Left cardiac atrium (tissue), 4 donors: ENCODE measurements at regions of chr15 and their contacts with region 1.

Region 1: GRCh38 chr15:96321639-96322535 is 8.6 kb upstream of the NR2F2 start:
- DNase-seq: peak; percentile 46
- ATAC-seq: peak; percentile 35 to 55

Region 2: DNA sequence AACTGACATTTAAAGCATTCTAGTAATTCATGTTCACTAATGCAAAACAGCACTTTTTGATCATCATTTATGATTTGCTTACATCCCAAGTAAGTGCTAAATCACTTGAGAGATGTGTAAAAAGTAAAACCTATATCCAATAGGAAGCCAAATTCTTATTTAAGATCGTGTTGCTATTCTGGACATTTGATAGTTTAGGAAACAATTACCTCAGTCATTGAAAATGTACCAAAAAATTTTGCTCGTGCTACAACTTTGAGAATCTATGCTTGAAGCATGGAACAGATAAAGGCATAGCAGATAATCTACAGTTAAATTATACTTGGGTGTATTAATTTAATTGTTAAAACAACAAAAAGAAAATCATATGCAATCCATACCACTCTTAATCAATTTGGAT is 563.0 kb before region 1 on chr15:
- intact Hi-C with region 1: loop called in 1 of 2 experiments (anchors 10 kb)
- DNase-seq: no peak
- ATAC-seq: no peak

Region 3: DNA sequence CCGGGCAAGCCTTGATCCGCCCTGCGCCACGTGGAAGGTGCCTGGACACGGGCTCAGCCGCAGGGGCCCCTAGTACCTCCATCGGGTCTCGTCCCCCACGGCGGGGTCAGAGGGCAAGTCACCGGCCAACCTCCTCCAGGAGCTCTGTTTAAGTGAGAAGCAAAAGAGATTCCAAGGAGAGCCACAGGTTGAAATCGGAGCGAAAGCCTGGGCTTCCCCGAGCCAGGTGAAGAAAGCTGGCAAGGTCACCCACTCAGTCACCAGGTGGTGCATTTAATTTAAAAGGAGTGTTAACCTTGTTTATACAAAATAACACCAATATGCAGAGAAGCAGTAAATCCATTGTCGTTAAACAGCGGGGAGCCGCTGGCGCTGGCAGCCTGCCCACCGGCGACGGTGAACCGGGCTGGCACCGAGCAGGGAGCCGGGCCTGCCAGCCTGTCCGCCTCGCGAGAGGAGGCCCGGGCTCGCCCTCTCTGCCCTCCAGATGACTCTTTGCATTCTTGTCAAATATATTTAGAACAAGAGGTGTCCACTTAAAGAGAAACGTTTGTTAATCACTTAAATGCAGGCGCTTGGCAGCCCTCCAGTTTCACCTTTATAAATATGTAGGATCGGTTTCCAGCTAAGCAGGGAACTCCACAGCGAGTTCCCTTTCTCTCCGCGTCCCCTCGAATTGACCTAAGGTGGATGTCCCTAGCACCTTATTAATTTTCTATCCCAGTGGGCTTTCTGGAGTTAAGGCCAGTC is 268.7 kb before region 1 on chr15:
- intact Hi-C with region 1: loop called in 1 of 2 experiments (anchors 5 kb)
- DNase-seq: peak; percentile 66
- ATAC-seq: peak; percentile 92 to 93